Pancreas (tissue), 10 donors: ENCODE measurements at regions of chr2 and their contacts with region 1.

Region 1: GRCh38 chr2:112481050-112481527 is 867 bp upstream of the TTL start:
- DNase-seq: peak; percentile 78 to 92 (median 82)
- ATAC-seq: peak; percentile 88 to 95 (median 91)
- H3K4me3 ChIP-seq: peak overlapping the region; percentile 59 to 85 (median 73)
- H3K27ac ChIP-seq: peak overlapping the region; percentile 51 to 87 (median 76)
- H3K4me1 ChIP-seq: peaks cover 3 to 13% (median 7%) of the 10 kb centered on the region in 3 donors
- H3K27me3 ChIP-seq: no peaks in the 10 kb centered on the region
- CTCF ChIP-seq: peak; percentile 20 to 58 (median 46)

Region 2: GRCh38 chr2:112584134-112584890 is 103.2 kb after region 1 on chr2 and contains the start of gene CHCHD5:
- intact Hi-C with region 1: loop called in 1 of 3 experiments (anchors 10 kb)
- DNase-seq: peak; percentile 90 to 97 (median 94)
- ATAC-seq: peak; percentile 74 to 89 (median 80)
- H3K4me3 ChIP-seq: peak within 1 kb of the TSS; percentile 16 to 75 (median 43)
- H3K27ac ChIP-seq: peak within 1 kb of the TSS; percentile 85 to 97 (median 96)
- H3K4me1 ChIP-seq: peaks cover 28 to 36% (median 32%) of the 10 kb centered on the region in 3 donors
- H3K27me3 ChIP-seq: no peaks in the 10 kb centered on the region
- CTCF ChIP-seq: peak in 1 of 4 donors; percentile 5
- total RNA-seq, gene CHCHD5: 17.2 to 36.4 (median 26.4) TPM